ENCODE measurements at regions of chr5 and their contacts with region 1.

Region 1: GRCh38 chr5:147509710-147510651 is at the start of gene DPYSL3:
- DNase-seq: peak; percentile 94
- H3K4me3 ChIP-seq: peak within 1 kb of the TSS; percentile 77 to 81 (median 80)
- H3K27ac ChIP-seq: peak within 1 kb of the TSS; percentile 87 to 94 (median 92)
- H3K4me1 ChIP-seq: peaks cover 0 to 47% (median 26%) of the 10 kb centered on the region in 4 donors
- H3K27me3 ChIP-seq: no peaks in the 10 kb centered on the region
- CTCF ChIP-seq: peak in 3 of 4 experiments; percentile 7 to 38 (median 21)
- EP300 ChIP-seq: peak in 2 of 4 donors; percentile 67 to 75
- POLR2A ChIP-seq: peak; percentile 20 to 58
- total RNA-seq, gene DPYSL3: 149 to 343 (median 184) TPM

Region 2: DNA sequence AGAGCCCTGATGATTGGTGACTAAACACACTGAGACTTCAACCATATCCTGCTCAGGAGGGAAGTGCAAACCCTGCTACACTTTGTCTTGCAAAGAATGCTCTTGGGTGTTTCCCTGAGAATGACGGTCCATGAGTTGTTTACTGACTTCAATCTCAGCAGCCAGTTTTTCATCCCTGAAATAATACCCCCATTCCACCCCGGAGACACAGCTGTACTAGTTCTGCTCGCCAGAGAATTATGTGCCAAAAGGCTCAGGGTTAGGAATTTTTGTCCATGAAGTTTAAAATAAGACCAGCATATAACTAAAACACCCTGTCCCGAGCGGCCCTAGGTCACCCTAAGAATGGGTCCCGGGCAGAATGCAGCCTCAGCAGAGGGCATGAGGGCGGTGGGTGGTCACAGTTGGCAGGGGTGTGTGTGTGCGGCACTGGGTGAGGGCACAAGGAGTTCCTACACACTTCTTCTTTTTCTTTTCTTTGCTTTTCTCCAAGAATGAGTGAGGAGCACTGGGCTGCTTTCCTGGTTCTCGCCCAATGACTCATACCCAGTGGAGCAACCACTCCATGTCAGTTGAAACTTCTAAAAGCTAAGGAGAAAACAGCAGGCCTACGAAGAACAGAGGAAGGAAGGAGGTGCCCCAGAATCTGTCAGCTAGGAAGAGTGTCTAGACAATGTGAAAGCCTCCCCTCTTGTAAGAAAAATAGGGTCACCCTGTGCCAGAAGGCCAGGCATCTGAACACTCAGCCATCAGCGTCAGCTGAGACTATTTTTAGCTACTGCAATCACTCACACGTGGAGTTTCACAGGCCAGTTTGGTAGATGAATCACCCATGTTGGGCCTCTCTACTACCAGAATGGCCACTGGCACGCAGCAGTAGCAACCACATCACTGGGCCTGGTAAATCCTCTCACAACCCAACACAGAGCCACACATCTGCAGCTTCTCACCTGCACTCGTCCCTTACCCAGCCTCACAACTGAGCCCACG is 106.0 kb before region 1 on chr5:
- intact Hi-C with region 1: loop called (anchors 5 kb)
- DNase-seq: peak; percentile 93
- H3K4me3 ChIP-seq: no peak overlapping the region
- H3K27ac ChIP-seq: peak overlapping the region; percentile 77 to 94 (median 89)
- H3K4me1 ChIP-seq: peaks cover 2 to 75% (median 52%) of the 10 kb centered on the region in 4 donors
- H3K27me3 ChIP-seq: no peaks in the 10 kb centered on the region
- CTCF ChIP-seq: no peak
- EP300 ChIP-seq: peak; percentile 50 to 87 (median 78)
- POLR2A ChIP-seq: no peak

Region 3: GRCh38 chr5:147464211-147464610 is 45.8 kb before region 1 on chr5:
- intact Hi-C with region 1: no loop called
- DNase-seq: no peak
- H3K4me3 ChIP-seq: no peak overlapping the region
- H3K27ac ChIP-seq: no peak overlapping the region
- H3K4me1 ChIP-seq: peaks cover 0 to 35% (median 20%) of the 10 kb centered on the region in 4 donors
- H3K27me3 ChIP-seq: no peaks in the 10 kb centered on the region
- CTCF ChIP-seq: peak in 2 of 4 experiments; percentile 24 to 37
- EP300 ChIP-seq: no peak
- POLR2A ChIP-seq: no peak

Region 4: GRCh38 chr5:147530530-147531389 is 20.8 kb after region 1 on chr5:
- intact Hi-C with region 1: loop called (anchors 2 kb)
- DNase-seq: no peak
- H3K4me3 ChIP-seq: no peak overlapping the region
- H3K27ac ChIP-seq: peak overlapping the region in 3 of 4 donors; percentile 45 to 70 (median 68)
- H3K4me1 ChIP-seq: peaks cover 0 to 29% (median 26%) of the 10 kb centered on the region in 4 donors
- H3K27me3 ChIP-seq: no peaks in the 10 kb centered on the region
- CTCF ChIP-seq: no peak
- EP300 ChIP-seq: no peak
- POLR2A ChIP-seq: no peak

Measured in sigmoid colon (tissue), 7 donors.